ENCODE measurements at regions of chr6 and their contacts with region 1.

Region 1: GRCh38 chr6:25223490-25223991 is 55.6 kb upstream of the CARMIL1 start:
- DNase-seq: peak; percentile 43 to 80 (median 56)
- ATAC-seq: peak; percentile 69
- H3K4me3 ChIP-seq: peak overlapping the region; percentile 27
- H3K4me3 Mint-ChIP-seq: peak overlapping the region; percentile 52
- H3K27ac ChIP-seq: no peak overlapping the region
- H3K27ac Mint-ChIP-seq: no peak overlapping the region
- H3K4me1 ChIP-seq: peaks cover 2% of the 10 kb centered on the region
- H3K4me1 Mint-ChIP-seq: peaks cover 11% of the 10 kb centered on the region
- H3K27me3 ChIP-seq: no peaks in the 10 kb centered on the region
- H3K27me3 Mint-ChIP-seq: peaks cover 12% of the 10 kb centered on the region
- CTCF ChIP-seq: peak; percentile 96

Region 2: DNA sequence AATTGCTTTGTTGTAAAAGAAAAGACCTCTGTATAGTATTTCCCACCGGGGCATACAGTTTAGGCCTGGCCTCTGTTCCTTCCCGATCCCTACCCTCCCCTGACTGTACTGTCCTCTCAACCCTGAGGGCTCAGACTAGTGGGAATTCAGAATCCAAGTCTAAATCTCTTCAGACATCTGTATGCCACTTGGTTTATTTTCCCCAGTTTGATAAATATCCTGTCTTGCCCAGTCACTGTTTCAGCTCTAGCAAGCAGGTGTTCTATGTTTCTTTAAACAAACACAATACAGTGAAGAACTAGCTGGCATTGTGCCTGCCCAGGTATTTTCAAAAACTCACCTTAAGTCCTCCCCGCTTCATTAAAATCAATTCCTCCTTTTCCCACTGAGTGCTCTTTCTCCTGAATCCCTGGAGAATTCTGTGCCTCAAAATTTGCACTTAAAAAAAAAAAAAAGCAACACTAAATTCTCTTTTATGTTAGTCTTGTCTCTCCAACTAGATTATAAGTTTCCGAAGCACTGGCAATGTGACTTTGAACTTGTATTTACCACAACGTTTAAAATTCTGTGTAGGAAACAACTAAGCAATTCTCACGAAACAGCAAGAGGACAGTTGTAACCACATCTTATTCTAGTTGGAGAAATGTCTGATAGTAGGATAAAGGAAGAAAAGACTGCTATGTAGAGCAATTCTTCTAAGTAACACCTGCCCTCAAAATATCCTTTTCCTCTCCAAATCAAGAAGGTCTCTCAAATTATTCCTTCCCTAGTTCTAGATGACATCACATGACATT is 56.4 kb before region 1 on chr6:
- CTCF ChIA-PET with region 1: no interaction called
- POLR2A ChIA-PET with region 1: no interaction called
- intact Hi-C with region 1: no loop called
- DNase-seq: no peak
- ATAC-seq: no peak
- H3K4me3 ChIP-seq: no peak overlapping the region
- H3K4me3 Mint-ChIP-seq: no peak overlapping the region
- H3K27ac ChIP-seq: no peak overlapping the region
- H3K27ac Mint-ChIP-seq: no peak overlapping the region
- H3K4me1 ChIP-seq: no peaks in the 10 kb centered on the region
- H3K4me1 Mint-ChIP-seq: peaks cover 15% of the 10 kb centered on the region
- H3K27me3 ChIP-seq: no peaks in the 10 kb centered on the region
- H3K27me3 Mint-ChIP-seq: peaks cover 5% of the 10 kb centered on the region
- CTCF ChIP-seq: no peak

Region 3: DNA sequence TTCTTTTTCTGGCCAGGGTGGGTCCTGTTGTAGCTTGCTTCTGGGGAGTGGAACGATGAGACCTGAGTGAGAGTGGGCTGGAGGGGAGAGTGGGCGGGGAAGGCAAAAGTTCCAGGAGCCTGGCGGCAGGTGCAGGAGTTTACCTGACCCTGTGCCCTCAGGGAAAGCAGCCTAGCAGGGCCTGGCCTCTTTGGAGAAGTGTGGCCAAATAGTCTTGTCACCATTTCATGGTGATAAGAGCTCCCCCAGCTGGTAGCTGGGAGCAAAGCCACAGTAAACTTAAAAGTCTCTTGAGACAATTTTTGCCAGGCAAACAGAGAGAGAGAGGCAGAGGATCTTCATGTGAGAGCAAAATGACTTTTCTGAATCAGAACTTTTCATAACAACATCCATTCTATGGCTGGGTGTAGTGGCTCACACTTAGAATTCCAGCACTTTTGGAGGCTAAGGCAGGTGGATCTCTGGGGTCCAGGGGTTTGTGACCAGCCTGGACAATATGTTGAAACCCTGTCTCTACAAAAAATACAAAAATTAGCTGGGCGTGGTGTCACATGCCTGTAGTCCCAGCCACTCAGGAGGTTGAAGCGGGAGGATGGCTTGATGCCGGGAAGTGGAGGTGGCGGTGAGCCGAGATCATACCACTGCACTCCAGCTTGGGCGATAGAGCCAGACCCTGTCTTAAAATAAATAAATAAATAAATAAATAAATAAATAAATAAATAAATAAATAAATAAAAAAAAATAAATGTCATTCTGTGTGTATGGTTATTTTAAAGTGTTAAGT is 266.7 kb after region 1 on chr6:
- CTCF ChIA-PET with region 1: interaction called, 18 read pairs
- POLR2A ChIA-PET with region 1: interaction called, 3 read pairs
- intact Hi-C with region 1: loop called (anchors 1 kb)
- DNase-seq: peak; percentile 39 to 82 (median 58)
- ATAC-seq: peak; percentile 82
- H3K4me3 ChIP-seq: no peak overlapping the region
- H3K4me3 Mint-ChIP-seq: no peak overlapping the region
- H3K27ac ChIP-seq: no peak overlapping the region
- H3K27ac Mint-ChIP-seq: peak overlapping the region; percentile 8
- H3K4me1 ChIP-seq: peaks cover 7% of the 10 kb centered on the region
- H3K4me1 Mint-ChIP-seq: peaks cover 8% of the 10 kb centered on the region
- H3K27me3 ChIP-seq: no peaks in the 10 kb centered on the region
- H3K27me3 Mint-ChIP-seq: no peaks in the 10 kb centered on the region
- CTCF ChIP-seq: peak; percentile 88

Region 4: DNA sequence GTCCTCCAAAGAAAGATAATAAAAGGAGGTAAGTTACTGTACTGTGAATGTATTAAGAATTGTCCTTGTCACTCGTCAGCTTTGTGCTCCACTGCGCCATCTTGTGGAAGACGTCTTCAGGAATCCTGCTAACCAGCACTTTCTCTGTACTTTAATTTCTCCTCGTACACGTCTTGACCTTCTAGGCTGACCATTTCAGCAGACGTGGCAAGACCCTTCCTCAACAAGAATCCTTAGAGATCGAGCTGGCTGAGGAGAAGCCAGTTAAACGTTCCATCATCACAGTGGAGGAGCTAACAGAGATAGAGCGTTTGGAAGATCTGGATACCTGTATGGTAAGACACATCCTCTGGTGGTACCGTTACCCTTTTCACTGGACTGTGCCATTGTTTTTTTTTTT is 333.0 kb after region 1 on chr6:
- CTCF ChIA-PET with region 1: interaction called, 16 read pairs
- POLR2A ChIA-PET with region 1: no interaction called
- intact Hi-C with region 1: loop called (anchors 1 kb)
- DNase-seq: peak; percentile 60 to 85 (median 74)
- ATAC-seq: no peak
- H3K4me3 ChIP-seq: no peak overlapping the region
- H3K4me3 Mint-ChIP-seq: no peak overlapping the region
- H3K27ac ChIP-seq: no peak overlapping the region
- H3K27ac Mint-ChIP-seq: no peak overlapping the region
- H3K4me1 ChIP-seq: no peaks in the 10 kb centered on the region
- H3K4me1 Mint-ChIP-seq: no peaks in the 10 kb centered on the region
- H3K27me3 ChIP-seq: no peaks in the 10 kb centered on the region
- H3K27me3 Mint-ChIP-seq: no peaks in the 10 kb centered on the region
- CTCF ChIP-seq: peak; percentile 87

Region 5: DNA sequence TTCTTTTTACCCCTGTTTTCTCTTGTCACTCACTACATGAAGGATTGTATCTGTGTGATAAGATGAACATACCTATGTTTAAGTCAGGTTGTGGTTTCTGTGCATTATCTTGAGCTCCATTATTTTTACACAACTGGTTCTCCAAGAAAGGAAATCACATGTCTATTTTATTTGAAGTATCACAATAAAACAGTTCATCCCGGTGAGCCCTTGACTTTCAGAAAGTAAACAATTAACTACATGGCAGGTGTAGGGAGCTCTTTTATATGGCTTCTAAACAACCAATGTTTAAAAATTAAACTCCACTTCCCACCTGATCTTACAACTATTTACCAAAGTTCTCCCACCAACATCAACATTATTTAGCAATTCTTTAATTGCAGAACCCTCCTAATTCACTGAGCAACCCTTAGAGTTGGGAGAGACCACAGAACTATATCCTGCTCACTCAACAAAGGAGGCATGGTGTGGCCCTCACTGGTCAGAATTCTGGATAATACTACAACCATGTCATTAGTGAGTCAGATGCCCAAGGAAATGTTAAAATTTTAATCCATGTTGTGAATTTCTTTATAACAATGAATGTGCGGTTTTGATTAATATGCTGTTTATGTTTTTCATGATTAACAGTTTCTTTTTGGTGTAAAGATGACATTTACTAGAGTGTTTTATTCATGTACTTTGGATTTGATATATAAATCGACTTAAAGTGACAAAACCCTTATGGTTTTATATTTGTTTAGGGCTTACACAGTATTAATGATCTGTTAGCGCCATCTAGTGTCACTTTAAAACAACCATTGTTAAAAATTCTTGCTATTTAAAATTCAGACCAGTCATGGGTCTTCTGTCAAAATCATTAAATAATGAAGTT is 378.5 kb after region 1 on chr6:
- CTCF ChIA-PET with region 1: interaction called, 7 read pairs
- POLR2A ChIA-PET with region 1: no interaction called
- intact Hi-C with region 1: loop called in 1 of 2 experiments (anchors 1 kb)
- DNase-seq: peak in 3 of 14 experiments; percentile 55 to 75 (median 69)
- ATAC-seq: no peak
- H3K4me3 ChIP-seq: no peak overlapping the region
- H3K4me3 Mint-ChIP-seq: no peak overlapping the region
- H3K27ac ChIP-seq: no peak overlapping the region
- H3K27ac Mint-ChIP-seq: no peak overlapping the region
- H3K4me1 ChIP-seq: no peaks in the 10 kb centered on the region
- H3K4me1 Mint-ChIP-seq: peaks cover 5% of the 10 kb centered on the region
- H3K27me3 ChIP-seq: no peaks in the 10 kb centered on the region
- H3K27me3 Mint-ChIP-seq: no peaks in the 10 kb centered on the region
- CTCF ChIP-seq: peak; percentile 81

Region 6: GRCh38 chr6:25717866-25718740 is 494.6 kb after region 1 on chr6:
- CTCF ChIA-PET with region 1: no interaction called
- POLR2A ChIA-PET with region 1: no interaction called
- intact Hi-C with region 1: loop called (anchors 5 to 10 kb)
- DNase-seq: peak in 3 of 14 experiments; percentile 22 to 39 (median 35)
- ATAC-seq: no peak
- H3K4me3 ChIP-seq: no peak overlapping the region
- H3K4me3 Mint-ChIP-seq: no peak overlapping the region
- H3K27ac ChIP-seq: no peak overlapping the region
- H3K27ac Mint-ChIP-seq: no peak overlapping the region
- H3K4me1 ChIP-seq: no peaks in the 10 kb centered on the region
- H3K4me1 Mint-ChIP-seq: no peaks in the 10 kb centered on the region
- H3K27me3 ChIP-seq: peaks cover 0 to 5% of the 10 kb centered on the region in 2 experiments
- H3K27me3 Mint-ChIP-seq: peaks cover 15% of the 10 kb centered on the region
- CTCF ChIP-seq: peak; percentile 59

Region 7: DNA sequence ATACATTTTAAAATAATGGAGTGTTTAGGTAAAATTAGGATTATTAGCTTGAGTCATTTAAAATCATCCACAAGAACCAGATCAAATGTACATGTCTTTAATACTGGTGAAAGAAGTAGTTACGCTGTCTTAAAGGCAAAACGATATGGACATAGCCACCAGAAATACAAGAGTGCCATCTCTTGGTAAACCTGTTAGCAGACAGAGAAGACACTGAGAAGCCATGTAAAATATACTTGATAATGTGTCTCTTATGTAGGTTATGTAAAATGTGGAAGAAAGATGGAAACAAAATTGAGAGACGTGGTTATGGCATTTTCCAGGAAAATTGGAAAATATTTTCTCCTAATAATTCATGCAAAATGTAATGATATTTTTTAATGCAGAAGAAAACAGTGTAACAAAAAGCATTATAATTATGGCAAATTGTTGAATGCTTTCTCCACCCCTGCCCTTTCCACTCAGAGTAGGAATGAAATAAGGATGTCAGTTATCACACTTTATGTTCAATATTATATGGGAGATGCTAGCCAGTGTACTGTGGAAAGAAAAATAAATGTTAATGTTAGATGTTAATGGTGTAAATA is 719.1 kb after region 1 on chr6:
- CTCF ChIA-PET with region 1: no interaction called
- POLR2A ChIA-PET with region 1: no interaction called
- intact Hi-C with region 1: loop called in 1 of 2 experiments (anchors 5 kb)
- DNase-seq: peak in 3 of 14 experiments; percentile 54 to 70 (median 66)
- ATAC-seq: peak; percentile 49
- H3K4me3 ChIP-seq: no peak overlapping the region
- H3K4me3 Mint-ChIP-seq: no peak overlapping the region
- H3K27ac ChIP-seq: no peak overlapping the region
- H3K27ac Mint-ChIP-seq: no peak overlapping the region
- H3K4me1 ChIP-seq: peaks cover 8% of the 10 kb centered on the region
- H3K4me1 Mint-ChIP-seq: peaks cover 9% of the 10 kb centered on the region
- H3K27me3 ChIP-seq: no peaks in the 10 kb centered on the region
- H3K27me3 Mint-ChIP-seq: peaks cover 5% of the 10 kb centered on the region
- CTCF ChIP-seq: peak; percentile 57

Region 8: GRCh38 chr6:26175428-26176181 is 952.1 kb after region 1 on chr6:
- CTCF ChIA-PET with region 1: no interaction called
- POLR2A ChIA-PET with region 1: no interaction called
- intact Hi-C with region 1: no loop called
- DNase-seq: peak in 11 of 14 experiments; percentile 13 to 85 (median 54)
- ATAC-seq: no peak
- H3K4me3 ChIP-seq: no peak overlapping the region
- H3K4me3 Mint-ChIP-seq: peak overlapping the region; percentile 83
- H3K27ac ChIP-seq: peak overlapping the region in 1 of 2 donors; percentile 41
- H3K27ac Mint-ChIP-seq: peak overlapping the region; percentile 93
- H3K4me1 ChIP-seq: peaks cover 17% of the 10 kb centered on the region
- H3K4me1 Mint-ChIP-seq: peaks cover 53% of the 10 kb centered on the region
- H3K27me3 ChIP-seq: no peaks in the 10 kb centered on the region
- H3K27me3 Mint-ChIP-seq: no peaks in the 10 kb centered on the region
- CTCF ChIP-seq: peak; percentile 87